Activated T-helper 2 cell treated with anti-CD3 and anti-CD28 coated beads, Interferon-gamma antibody, Interleukin-2, Interleukin-4, amounts not matched to agents 10 μg/mL and 5 μg/mL and 100 μg/mL, durations not matched to agents 14 hours and 24 hours and 36 hours (primary cell): ENCODE measurements at regions of chr10 and their contacts with region 1.

Region 1: GRCh38 chr10:89643431-89644331 is 1.4 kb downstream of the PANK1 start:
- DNase-seq: peak; percentile 79
- H3K4me3 Mint-ChIP-seq: no peak overlapping the region
- H3K27ac Mint-ChIP-seq: no peak overlapping the region
- H3K4me1 Mint-ChIP-seq: peaks cover 12% of the 10 kb centered on the region
- H3K27me3 Mint-ChIP-seq: peaks cover 12% of the 10 kb centered on the region

Region 2: DNA sequence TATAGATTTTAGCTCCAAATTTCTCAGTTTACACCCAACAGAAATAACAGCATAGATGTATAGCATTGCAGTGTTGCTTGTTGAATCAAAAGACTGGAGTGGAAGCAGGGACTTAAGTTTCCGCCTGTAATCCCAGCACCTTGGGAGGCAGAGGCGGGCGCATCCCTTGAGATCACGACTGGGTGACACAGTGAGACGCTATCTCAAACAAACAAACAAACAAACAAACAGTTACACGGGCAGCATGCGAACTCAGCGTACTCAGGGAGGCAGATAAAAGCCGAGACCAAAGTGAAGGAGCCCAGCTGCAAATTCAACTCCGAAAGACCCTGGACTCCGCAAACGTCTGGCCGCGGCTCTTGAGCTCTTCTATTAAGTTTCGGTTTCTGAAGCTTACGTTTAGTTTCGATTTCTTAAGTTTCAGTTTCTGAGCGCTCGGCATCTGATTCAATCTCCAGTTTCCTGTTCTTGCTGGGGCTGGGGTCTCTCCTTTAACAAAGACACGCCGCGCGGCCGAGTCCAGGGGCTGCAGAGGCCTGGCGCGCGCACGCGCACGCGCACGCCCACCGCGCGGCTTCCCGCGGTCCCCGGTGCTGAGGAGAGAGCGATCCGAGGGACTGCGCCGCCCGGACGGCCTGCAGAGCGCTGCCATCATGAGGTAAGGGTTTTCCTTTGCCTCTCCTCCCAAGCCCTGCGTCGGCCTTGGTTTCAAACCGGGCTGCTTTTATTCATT is 229.4 kb before region 1 on chr10 and contains the start of gene IFIT5:
- intact Hi-C with region 1: loop called (anchors 2 kb)
- DNase-seq: peak; percentile 67
- H3K4me3 Mint-ChIP-seq: peak within 1 kb of the TSS; percentile 87
- H3K27ac Mint-ChIP-seq: peak within 1 kb of the TSS; percentile 93
- H3K4me1 Mint-ChIP-seq: peaks cover 40% of the 10 kb centered on the region
- H3K27me3 Mint-ChIP-seq: peaks cover 6% of the 10 kb centered on the region
- total RNA-seq, gene IFIT5: 4.4 and 4.8 TPM in 2 replicates

Region 3: GRCh38 chr10:89815049-89815853 is 171.6 kb after region 1 on chr10:
- intact Hi-C with region 1: no loop called
- DNase-seq: no peak
- H3K4me3 Mint-ChIP-seq: no peak overlapping the region
- H3K27ac Mint-ChIP-seq: no peak overlapping the region
- H3K4me1 Mint-ChIP-seq: no peaks in the 10 kb centered on the region
- H3K27me3 Mint-ChIP-seq: peaks cover 25% of the 10 kb centered on the region

Region 4: DNA sequence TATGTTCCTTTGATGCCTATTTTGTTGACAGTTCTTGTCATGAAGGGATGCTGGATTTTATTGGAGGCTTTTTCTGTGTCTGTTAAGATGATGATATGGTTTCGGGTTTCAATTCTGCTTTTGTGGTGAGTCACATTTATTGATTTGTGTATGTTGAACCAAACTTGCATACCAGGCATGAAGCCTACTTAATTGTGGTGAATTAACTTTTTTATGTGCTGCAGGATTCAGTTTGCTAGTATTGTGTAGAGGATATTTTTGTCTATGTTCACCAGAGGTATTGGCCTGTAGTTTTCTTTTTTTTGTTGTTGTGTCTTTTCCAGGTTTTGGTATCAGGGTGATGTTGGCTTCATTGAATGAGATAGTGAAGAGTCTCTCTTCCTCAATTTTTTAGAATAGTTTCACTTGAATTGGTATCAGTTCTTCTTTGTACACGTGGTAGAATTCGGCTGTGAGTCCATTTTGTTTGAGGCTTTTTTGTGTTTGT is 403.6 kb after region 1 on chr10:
- intact Hi-C with region 1: no loop called
- DNase-seq: no peak
- H3K4me3 Mint-ChIP-seq: no peak overlapping the region
- H3K27ac Mint-ChIP-seq: no peak overlapping the region
- H3K4me1 Mint-ChIP-seq: no peaks in the 10 kb centered on the region
- H3K27me3 Mint-ChIP-seq: no peaks in the 10 kb centered on the region